ENCODE measurements at regions of chr12 and their contacts with region 1.

Region 1: DNA sequence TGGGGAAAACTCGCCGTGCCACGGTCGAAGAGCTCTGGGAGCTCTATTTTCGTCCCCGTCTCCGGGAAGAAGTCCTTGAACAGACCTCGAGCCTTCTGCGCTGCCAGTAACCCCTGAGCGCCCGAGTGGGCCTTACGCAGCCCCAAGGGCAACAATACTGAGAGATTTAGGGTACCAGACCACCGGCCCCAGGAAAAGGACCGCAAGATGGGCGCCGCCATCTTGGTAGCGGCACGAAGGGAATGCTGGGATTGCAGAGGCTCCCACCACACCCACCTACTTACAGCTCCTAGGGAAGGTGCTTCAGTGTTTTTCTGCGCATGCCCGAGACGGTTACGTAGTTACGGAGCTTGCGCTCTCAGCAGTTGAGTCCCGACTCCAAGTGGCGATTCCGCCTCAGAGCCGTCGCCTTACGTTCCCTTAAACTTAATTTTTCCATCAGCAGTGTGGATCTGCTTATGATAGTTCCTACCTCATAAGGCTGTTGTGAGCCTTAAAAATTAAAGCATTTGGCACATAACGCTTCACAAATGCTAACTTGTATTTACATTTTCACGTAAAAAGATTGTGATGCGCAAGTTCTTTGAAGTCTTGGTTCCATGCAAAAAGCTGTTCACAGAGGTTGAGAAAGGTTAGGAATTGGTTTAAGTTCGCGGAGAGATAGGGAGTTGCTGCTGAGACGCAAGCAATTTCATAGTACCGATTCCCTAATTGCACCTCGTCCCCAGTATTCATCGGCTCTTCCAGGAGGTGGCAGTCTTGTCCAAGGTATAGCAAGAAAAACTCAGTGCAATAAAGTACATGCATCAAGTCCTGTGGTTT is at the start of gene YARS2:
- DNase-seq: peak; percentile 97 to 99
- H3K4me3 ChIP-seq: peak within 1 kb of the TSS; percentile 79 to 98 (median 90)
- H3K27ac ChIP-seq: peak within 1 kb of the TSS; percentile 71 to 94 (median 87)
- H3K4me1 ChIP-seq: peaks cover 11 to 28% (median 20%) of the 10 kb centered on the region in 4 donors
- H3K27me3 ChIP-seq: no peaks in the 10 kb centered on the region
- CTCF ChIP-seq: peak in 5 of 7 experiments; percentile 59 to 90 (median 82)
- EP300 ChIP-seq: no peak
- POLR2A ChIP-seq: peak in 1 of 4 donors; percentile 12
- total RNA-seq, gene YARS2: 0.58 to 22.6 (median 10.7) TPM

Region 2: GRCh38 chr12:32920280-32921089 is 164.6 kb after region 1 on chr12:
- intact Hi-C with region 1: loop called (anchors 10 kb)
- DNase-seq: peak in 1 of 2 donors; percentile 20
- H3K4me3 ChIP-seq: no peak overlapping the region
- H3K27ac ChIP-seq: peak overlapping the region in 4 of 5 donors; percentile 23 to 55 (median 40)
- H3K4me1 ChIP-seq: peaks cover 0 to 19% (median 3%) of the 10 kb centered on the region in 4 donors
- H3K27me3 ChIP-seq: no peaks in the 10 kb centered on the region
- CTCF ChIP-seq: no peak
- EP300 ChIP-seq: no peak
- POLR2A ChIP-seq: no peak

Region 3: DNA sequence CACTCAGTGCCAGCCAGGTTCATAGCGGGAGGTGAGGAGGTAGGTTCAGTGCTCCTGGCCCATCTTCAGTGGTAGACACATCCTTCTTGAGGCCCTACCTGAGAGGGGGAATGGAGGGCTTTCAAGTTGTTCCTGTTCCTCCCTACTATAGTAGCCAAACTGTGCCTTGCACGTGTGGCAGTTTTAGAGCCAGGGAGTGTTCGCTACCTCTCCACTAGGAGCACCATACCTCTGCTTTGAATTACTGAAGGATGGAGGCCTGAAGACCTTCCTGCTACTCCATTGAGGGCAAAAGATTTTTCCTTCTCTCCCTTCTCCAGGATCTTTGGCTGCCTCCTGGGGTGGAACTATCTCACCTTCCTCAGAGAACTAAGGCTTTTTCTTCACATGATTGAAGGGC is 1260.5 kb after region 1 on chr12:
- intact Hi-C with region 1: loop called (anchors 5 kb)
- DNase-seq: no peak
- H3K4me3 ChIP-seq: no peak overlapping the region
- H3K27ac ChIP-seq: no peak overlapping the region
- H3K4me1 ChIP-seq: peaks cover 0 to 4% (median 2%) of the 10 kb centered on the region in 4 donors
- H3K27me3 ChIP-seq: no peaks in the 10 kb centered on the region
- CTCF ChIP-seq: no peak
- EP300 ChIP-seq: no peak
- POLR2A ChIP-seq: no peak